Breast epithelium (tissue), 4 donors: ENCODE measurements at regions of chr6 and their contacts with region 1.

Region 1: DNA sequence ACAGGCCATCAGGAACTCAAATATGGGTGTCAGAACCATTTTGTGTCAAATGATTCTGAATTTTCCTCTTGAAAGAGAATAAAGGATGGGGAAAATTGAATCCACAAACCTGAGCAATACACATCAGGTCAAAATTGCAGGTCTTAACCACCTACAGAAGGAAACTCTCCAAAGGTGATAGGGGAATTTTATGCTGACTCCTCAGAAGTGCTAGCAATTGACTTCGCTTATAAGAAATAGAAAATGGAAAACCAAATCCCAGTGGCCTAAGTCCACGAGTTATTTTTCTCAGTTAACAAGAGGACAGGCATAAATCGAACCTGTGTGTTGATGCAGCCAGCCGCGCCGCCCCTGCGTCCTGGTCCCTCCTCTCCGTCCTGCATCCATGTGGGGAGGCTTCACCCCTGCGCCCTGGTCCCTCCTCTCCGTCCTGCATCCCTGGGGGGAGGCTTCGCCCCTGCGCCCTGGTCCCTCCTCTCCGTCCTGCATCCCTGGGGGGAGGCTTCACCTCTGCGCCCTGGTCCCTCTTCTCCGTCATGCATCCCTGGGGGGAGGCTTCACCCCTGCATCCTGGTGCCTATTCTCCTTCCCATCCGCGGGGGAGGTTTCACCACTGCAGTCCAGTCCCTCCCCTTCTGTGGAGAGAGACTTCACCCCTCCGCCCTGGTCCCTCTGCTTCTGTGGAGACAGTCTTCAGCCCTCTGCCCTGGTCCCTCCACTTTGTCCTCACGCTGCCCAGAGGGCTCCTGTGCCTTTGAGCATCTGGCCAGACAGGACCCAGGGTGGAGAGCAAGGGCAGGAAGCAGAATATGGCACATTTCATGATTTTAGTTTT is 230.3 kb downstream of the SMOC2 start:
- DNase-seq: no peak
- H3K4me3 ChIP-seq: no peak overlapping the region
- H3K27ac ChIP-seq: no peak overlapping the region
- H3K4me1 ChIP-seq: no peaks in the 10 kb centered on the region
- H3K27me3 ChIP-seq: no peaks in the 10 kb centered on the region
- CTCF ChIP-seq: no peak
- POLR2A ChIP-seq: no peak

Region 2: DNA sequence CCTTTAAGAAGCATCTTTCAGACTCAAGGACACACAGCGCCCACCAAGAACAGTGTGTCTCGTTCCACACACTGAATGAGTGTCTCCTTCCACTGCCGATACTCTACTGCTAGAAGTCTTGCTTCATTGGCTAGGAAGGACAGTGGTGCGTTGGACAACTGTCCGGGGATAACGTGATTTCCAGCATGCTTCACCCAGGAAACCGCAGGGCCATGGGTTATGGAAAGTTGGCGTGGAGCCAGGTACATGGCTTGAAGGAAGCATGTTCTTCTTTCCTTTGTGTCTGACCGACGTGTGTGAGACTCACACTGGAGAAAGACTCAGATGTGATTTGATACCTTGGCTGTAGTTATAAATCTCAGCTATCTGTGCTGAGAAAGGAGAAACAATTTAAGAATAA is 157.0 kb before region 1 on chr6:
- intact Hi-C with region 1: loop called (anchors 5 kb)
- DNase-seq: peak in 1 of 2 donors; percentile 68
- H3K4me3 ChIP-seq: no peak overlapping the region
- H3K27ac ChIP-seq: peak overlapping the region in 1 of 2 donors; percentile 80
- H3K4me1 ChIP-seq: no peaks in the 10 kb centered on the region
- H3K27me3 ChIP-seq: no peaks in the 10 kb centered on the region
- CTCF ChIP-seq: no peak
- POLR2A ChIP-seq: no peak